Endothelial cell of umbilical vein (primary cell): ENCODE measurements at regions of chr7 and their contacts with region 1.

Region 1: DNA sequence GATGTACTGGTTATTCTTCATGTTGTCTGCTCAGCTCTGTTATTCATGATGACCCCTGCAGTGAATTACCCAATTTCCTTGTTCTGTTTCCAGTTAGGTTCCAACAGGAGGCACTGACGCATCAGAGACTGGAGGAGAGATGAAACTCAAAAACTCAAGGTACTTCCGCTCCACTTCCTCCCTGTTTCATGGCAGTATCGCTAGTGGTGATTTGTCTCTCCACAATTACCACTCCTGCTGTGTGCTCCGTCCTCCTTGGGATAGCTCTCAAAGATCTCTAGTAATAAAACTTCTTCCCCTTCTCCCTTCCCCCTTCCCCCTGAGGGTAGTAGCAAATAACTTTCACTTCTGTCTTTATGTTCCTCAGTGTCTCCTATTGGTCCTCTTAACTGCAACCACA is 107.4 kb upstream of the ABCB5 start:
- DNase-seq: no peak
- H3K4me3 ChIP-seq: no peak overlapping the region
- H3K27ac ChIP-seq: no peak overlapping the region
- H3K4me1 ChIP-seq: peaks cover 25% of the 10 kb centered on the region
- H3K27me3 ChIP-seq: no peaks in the 10 kb centered on the region
- CTCF ChIP-seq: no peak
- POLR2A ChIP-seq: no peak

Region 2: GRCh38 chr7:19708397-19709248 is 799.5 kb before region 1 on chr7 and contains the start of gene POLR1F:
- CTCF ChIA-PET with region 1: no interaction called
- POLR2A ChIA-PET with region 1: no interaction called
- dilution Hi-C with region 1: no loop called
- intact Hi-C with region 1: loop called (anchors 2 kb)
- DNase-seq: peak; percentile 97
- H3K4me3 ChIP-seq: peak within 1 kb of the TSS; percentile 45 to 83 (median 77)
- H3K27ac ChIP-seq: peak within 1 kb of the TSS; percentile 44
- H3K4me1 ChIP-seq: peaks cover 19% of the 10 kb centered on the region
- H3K27me3 ChIP-seq: peaks cover 0 to 12% of the 10 kb centered on the region in 2 experiments
- CTCF ChIP-seq: peak; percentile 88 to 92
- POLR2A ChIP-seq: peak; percentile 92
- total RNA-seq, gene POLR1F: 21.0 and 27.0 TPM in 2 replicates

Region 3: GRCh38 chr7:20424500-20424899 is 83.6 kb before region 1 on chr7:
- CTCF ChIA-PET with region 1: no interaction called
- POLR2A ChIA-PET with region 1: no interaction called
- dilution Hi-C with region 1: no loop called
- intact Hi-C with region 1: no loop called
- DNase-seq: no peak
- H3K4me3 ChIP-seq: no peak overlapping the region
- H3K27ac ChIP-seq: no peak overlapping the region
- H3K4me1 ChIP-seq: no peaks in the 10 kb centered on the region
- H3K27me3 ChIP-seq: no peaks in the 10 kb centered on the region
- CTCF ChIP-seq: no peak
- POLR2A ChIP-seq: no peak

Region 4: GRCh38 chr7:20447021-20447650 is 61.0 kb before region 1 on chr7:
- CTCF ChIA-PET with region 1: no interaction called
- POLR2A ChIA-PET with region 1: no interaction called
- dilution Hi-C with region 1: no loop called
- intact Hi-C with region 1: no loop called
- DNase-seq: no peak
- H3K4me3 ChIP-seq: no peak overlapping the region
- H3K27ac ChIP-seq: no peak overlapping the region
- H3K4me1 ChIP-seq: peaks cover 4% of the 10 kb centered on the region
- H3K27me3 ChIP-seq: no peaks in the 10 kb centered on the region
- CTCF ChIP-seq: no peak
- POLR2A ChIP-seq: no peak